MCF 10A (cell line): ENCODE measurements at regions of chr1 and their contacts with region 1.

Region 1: DNA sequence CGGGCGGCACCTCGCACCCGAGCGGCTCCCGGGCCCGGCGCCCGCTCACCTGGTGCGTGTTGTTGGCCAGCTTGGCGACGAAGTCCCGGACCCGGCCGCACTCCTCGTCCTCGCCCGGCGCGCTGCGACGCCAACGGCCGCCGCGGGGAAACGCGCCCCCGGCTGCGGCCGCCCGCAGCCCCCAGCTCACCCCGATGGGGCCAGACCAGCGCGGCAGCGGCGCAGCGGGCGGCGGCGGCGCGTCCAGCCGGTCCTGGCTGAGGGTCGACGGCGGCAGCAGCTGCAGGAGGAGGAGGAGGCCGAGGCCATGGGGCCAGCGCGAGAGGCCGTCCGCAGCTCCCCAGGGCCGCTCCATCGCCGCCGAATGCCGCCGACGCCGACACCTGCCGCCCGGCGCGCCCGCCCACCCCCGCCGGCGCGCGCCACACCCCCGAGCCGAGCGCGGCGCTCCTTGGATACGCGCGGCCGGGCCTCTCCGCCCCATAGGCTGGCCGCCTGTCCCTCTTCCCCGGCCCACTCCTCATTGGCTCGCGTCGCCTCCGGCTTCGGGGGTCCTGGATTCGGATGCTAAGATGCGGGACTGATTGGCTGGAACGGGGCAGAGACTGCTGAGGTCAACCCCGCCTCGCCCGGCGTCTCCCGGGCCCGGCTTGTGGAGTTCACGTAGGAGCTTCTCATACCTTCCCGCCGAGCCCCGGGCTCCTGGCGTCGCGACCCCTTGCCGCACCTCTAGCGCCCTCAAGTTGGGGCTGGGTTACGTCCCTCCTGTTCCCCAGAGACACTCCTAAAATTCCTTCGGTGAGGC is at the start of gene SORT1:
- DNase-seq: peak; percentile 77
- H3K4me3 Mint-ChIP-seq: peak within 1 kb of the TSS; percentile 78
- H3K27ac Mint-ChIP-seq: no peak within 1 kb of the TSS
- H3K4me1 Mint-ChIP-seq: peaks cover 24% of the 10 kb centered on the region
- H3K27me3 Mint-ChIP-seq: no peaks in the 10 kb centered on the region
- CTCF ChIP-seq: no peak
- total RNA-seq, gene SORT1: 13.3 TPM in 2 replicates

Region 2: DNA sequence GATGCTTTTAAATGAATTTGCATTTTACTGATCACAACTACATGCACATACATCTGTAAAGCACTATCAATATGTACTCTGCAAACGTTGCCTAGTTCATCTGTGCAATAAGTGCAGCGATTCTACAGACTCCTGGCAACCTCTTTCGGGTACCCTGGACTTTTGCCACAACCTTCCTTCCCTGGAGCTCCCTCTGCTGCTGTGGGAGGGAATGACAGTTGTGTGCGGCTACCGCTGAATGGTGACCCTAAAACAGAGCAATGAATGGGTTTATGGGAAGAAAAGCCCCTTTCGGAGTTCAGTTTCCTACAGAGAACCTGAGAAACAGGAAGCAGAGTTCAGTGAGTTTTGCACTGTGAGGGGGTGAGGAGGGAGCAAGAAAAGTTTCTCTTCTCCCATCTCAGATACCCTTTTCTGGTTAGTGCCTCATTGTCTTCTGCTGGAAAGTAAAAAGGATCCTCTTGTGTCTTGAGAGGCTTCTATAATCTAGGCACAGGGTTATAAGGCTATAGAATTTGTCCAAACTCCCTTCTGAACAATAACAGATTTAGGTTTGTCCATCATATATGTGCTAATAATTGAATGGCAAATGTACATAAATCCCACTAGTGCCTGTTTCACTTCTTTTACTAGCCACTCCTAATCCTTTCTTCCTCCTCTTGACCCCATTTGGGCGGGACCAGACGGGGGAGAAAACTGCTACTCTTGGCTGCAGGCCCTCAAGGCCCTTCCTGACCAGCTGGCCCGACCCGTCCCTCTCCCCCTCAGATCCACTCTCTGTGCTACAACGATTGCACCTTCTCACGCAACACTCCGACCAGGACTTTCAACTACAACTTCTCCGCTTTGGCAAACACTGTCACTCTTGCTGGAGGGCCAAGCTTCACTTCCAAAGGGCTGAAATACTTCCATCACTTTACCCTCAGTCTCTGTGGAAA is 203.8 kb before region 1 on chr1:
- CTCF ChIA-PET with region 1: interaction called, 7 read pairs
- POLR2A ChIA-PET with region 1: interaction called, 13 read pairs
- intact Hi-C with region 1: no loop called
- DNase-seq: peak; percentile 58
- H3K4me3 Mint-ChIP-seq: no peak overlapping the region
- H3K27ac Mint-ChIP-seq: no peak overlapping the region
- H3K4me1 Mint-ChIP-seq: peaks cover 24% of the 10 kb centered on the region
- H3K27me3 Mint-ChIP-seq: no peaks in the 10 kb centered on the region
- CTCF ChIP-seq: peak; percentile 59

Region 3: DNA sequence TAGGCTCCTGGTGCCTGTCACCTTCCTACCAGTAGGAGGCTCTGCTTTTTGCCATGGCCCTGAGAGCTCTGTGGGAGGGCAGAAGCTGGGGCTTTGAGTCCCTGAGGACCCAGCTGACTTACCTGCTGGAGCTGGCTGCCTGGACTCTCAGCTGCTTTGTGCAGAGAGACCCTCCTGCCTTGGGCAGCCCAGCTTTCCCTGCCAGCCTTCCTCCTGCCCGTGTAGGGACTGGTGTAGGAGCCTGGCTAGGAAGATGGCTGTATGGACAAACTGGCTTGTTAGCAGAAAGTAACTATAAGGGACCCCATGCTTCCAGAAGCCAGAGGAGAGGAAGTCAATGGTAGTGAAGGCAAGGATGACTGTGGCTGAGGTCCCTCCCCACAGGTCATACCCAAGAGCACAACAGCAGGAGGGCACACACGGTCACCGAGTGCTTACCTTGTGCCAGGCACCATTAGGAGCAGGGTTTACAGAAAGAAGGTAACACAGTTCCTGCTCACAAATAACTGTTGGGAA is 158.1 kb before region 1 on chr1:
- CTCF ChIA-PET with region 1: interaction called, 9 read pairs
- POLR2A ChIA-PET with region 1: interaction called, 12 read pairs
- intact Hi-C with region 1: no loop called
- DNase-seq: peak; percentile 75
- H3K4me3 Mint-ChIP-seq: peak overlapping the region; percentile 2
- H3K27ac Mint-ChIP-seq: peak overlapping the region; percentile 69
- H3K4me1 Mint-ChIP-seq: peaks cover 23% of the 10 kb centered on the region
- H3K27me3 Mint-ChIP-seq: no peaks in the 10 kb centered on the region
- CTCF ChIP-seq: peak; percentile 52

Region 4: DNA sequence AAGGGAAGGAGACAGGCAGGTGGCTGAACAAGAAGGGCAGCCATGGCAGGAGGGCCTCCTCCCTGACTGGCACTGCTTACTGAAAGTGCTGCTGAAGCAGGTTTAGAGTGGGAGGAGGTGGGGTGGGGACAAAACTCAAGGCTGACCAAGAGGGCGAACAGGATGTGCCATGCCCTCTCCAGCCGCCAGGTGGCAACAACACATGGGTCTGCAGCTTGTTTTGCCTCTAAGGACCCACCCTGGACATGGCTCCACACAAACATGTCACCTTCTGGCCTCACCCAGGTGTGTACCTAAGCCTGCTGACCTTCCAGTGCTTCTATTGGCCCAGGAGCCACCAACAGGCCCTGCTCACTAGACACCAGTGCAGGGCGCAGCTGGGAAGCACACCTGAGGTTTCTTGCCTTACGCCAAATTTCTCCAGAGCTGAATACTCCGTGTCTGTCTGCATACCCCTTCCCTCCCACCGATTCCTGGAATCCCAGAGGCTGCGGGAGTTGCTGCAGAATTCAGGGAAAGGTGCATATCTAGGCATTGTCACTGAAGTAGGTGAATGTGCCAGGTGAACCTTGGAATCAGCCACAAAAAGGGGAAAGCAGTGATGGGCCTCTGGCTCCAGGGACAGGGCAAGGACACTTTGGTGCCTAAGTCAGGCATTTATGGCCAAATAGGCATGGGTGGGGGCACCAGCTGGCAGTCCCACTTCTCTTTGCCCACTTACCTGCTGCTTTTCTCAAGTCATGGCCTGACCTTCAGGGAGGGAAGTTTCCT is 120.1 kb before region 1 on chr1:
- CTCF ChIA-PET with region 1: interaction called, 102 read pairs
- POLR2A ChIA-PET with region 1: interaction called, 35 read pairs
- intact Hi-C with region 1: loop called (anchors 1 kb)
- DNase-seq: peak; percentile 70
- H3K4me3 Mint-ChIP-seq: no peak overlapping the region
- H3K27ac Mint-ChIP-seq: peak overlapping the region; percentile 16
- H3K4me1 Mint-ChIP-seq: peaks cover 48% of the 10 kb centered on the region
- H3K27me3 Mint-ChIP-seq: no peaks in the 10 kb centered on the region
- CTCF ChIP-seq: peak; percentile 92

Region 5: DNA sequence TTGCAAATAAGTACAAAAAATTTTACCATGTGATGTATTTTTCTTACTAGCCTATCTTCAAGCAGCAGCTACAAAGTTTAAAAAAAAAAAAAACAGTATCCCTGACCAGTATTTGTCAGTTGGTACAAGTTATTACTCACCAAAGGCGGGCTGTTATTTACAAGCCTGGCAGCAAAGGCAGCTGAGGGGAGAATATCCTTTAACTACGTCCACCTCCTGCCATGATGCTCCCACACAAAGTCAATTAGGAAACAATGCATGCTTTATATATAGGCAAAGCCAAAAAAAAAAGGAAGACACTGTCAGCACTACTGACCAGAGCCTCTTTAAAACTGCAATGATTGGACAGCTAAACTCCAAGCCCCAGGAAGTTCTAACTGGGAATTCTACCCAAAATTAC is 14.8 kb after region 1 on chr1:
- CTCF ChIA-PET with region 1: interaction called, 17 read pairs
- POLR2A ChIA-PET with region 1: interaction called, 4 read pairs
- intact Hi-C with region 1: no loop called
- DNase-seq: no peak
- H3K4me3 Mint-ChIP-seq: no peak overlapping the region
- H3K27ac Mint-ChIP-seq: no peak overlapping the region
- H3K4me1 Mint-ChIP-seq: peaks cover 11% of the 10 kb centered on the region
- H3K27me3 Mint-ChIP-seq: no peaks in the 10 kb centered on the region
- CTCF ChIP-seq: no peak

Region 6: DNA sequence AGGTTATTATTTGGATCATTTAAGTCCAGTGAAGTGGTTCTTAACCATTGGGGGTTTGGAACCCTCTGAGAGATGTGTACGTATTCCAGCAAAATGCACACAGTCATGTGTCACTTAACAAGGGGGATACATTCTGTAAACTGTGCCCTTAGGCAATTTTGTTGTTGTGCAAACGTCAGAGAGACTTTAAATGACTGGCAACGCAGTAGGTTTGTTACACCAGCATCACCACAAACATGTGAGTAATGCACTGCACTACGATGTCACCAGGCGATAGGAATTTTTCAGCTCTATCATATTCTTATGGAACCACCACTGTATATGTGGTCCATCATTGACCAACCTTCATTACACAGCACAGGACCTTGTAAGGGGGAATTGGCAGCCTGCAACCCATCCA is 598.7 kb after region 1 on chr1:
- CTCF ChIA-PET with region 1: no interaction called
- POLR2A ChIA-PET with region 1: no interaction called
- intact Hi-C with region 1: no loop called
- DNase-seq: peak; percentile 73
- H3K4me3 Mint-ChIP-seq: no peak overlapping the region
- H3K27ac Mint-ChIP-seq: no peak overlapping the region
- H3K4me1 Mint-ChIP-seq: peaks cover 37% of the 10 kb centered on the region
- H3K27me3 Mint-ChIP-seq: no peaks in the 10 kb centered on the region
- CTCF ChIP-seq: no peak